Activated CD4-positive, alpha-beta memory T cell treated with anti-CD3 and anti-CD28 coated beads, Interleukin-2, amount 10 ng/mL, durations not matched to agents 7 days and 5 days (primary cell): ENCODE measurements at regions of chr1 and their contacts with region 1.

Region 1: GRCh38 chr1:66446261-66447001 is 87.5 kb upstream of the SGIP1 start:
- DNase-seq: peak; percentile 31
- H3K4me3 Mint-ChIP-seq: peak overlapping the region; percentile 75
- H3K27ac Mint-ChIP-seq: peak overlapping the region; percentile 93
- H3K4me1 Mint-ChIP-seq: peaks cover 29% of the 10 kb centered on the region
- H3K27me3 Mint-ChIP-seq: peaks cover 18% of the 10 kb centered on the region

Region 2: GRCh38 chr1:65958561-65959350 is 487.7 kb before region 1 on chr1:
- CTCF ChIA-PET with region 1: interaction called, 24 read pairs
- POLR2A ChIA-PET with region 1: interaction called, 5 read pairs
- DNase-seq: no peak
- H3K4me3 Mint-ChIP-seq: no peak overlapping the region
- H3K27ac Mint-ChIP-seq: no peak overlapping the region
- H3K4me1 Mint-ChIP-seq: peaks cover 10% of the 10 kb centered on the region
- H3K27me3 Mint-ChIP-seq: no peaks in the 10 kb centered on the region

Region 3: GRCh38 chr1:66258404-66259105 is 187.9 kb before region 1 on chr1:
- CTCF ChIA-PET with region 1: interaction called, 422 read pairs
- POLR2A ChIA-PET with region 1: interaction called, 50 read pairs
- DNase-seq: no peak
- H3K4me3 Mint-ChIP-seq: no peak overlapping the region
- H3K27ac Mint-ChIP-seq: peak overlapping the region; percentile 21
- H3K4me1 Mint-ChIP-seq: peaks cover 74% of the 10 kb centered on the region
- H3K27me3 Mint-ChIP-seq: no peaks in the 10 kb centered on the region

Region 4: GRCh38 chr1:66342707-66343106 is 103.7 kb before region 1 on chr1:
- CTCF ChIA-PET with region 1: interaction called, 58 read pairs
- POLR2A ChIA-PET with region 1: interaction called, 5 read pairs
- DNase-seq: no peak
- H3K4me3 Mint-ChIP-seq: peak overlapping the region; percentile 31
- H3K27ac Mint-ChIP-seq: peak overlapping the region; percentile 68
- H3K4me1 Mint-ChIP-seq: peaks cover 83% of the 10 kb centered on the region
- H3K27me3 Mint-ChIP-seq: no peaks in the 10 kb centered on the region

Region 5: GRCh38 chr1:66374561-66375111 is 71.8 kb before region 1 on chr1:
- CTCF ChIA-PET with region 1: interaction called, 20 read pairs
- POLR2A ChIA-PET with region 1: interaction called, 5 read pairs
- DNase-seq: peak; percentile 33
- H3K4me3 Mint-ChIP-seq: peak overlapping the region; percentile 49
- H3K27ac Mint-ChIP-seq: peak overlapping the region; percentile 87
- H3K4me1 Mint-ChIP-seq: peaks cover 62% of the 10 kb centered on the region
- H3K27me3 Mint-ChIP-seq: no peaks in the 10 kb centered on the region